ENCODE measurements at regions of chr1 and their contacts with region 1.

Region 1: GRCh38 chr1:15430787-15431570 is 7.3 kb upstream of the CTRC start:
- DNase-seq: peak; percentile 82
- ATAC-seq: peak; percentile 93
- H3K4me3 Mint-ChIP-seq: no peak overlapping the region
- H3K27ac Mint-ChIP-seq: no peak overlapping the region
- H3K4me1 Mint-ChIP-seq: peaks cover 7% of the 10 kb centered on the region
- H3K27me3 Mint-ChIP-seq: no peaks in the 10 kb centered on the region
- CTCF ChIP-seq: peak; percentile 99

Region 2: GRCh38 chr1:15417365-15417934 is 13.5 kb before region 1 on chr1:
- CTCF ChIA-PET with region 1: interaction called, 3 read pairs
- POLR2A ChIA-PET with region 1: interaction called, 11 read pairs
- intact Hi-C with region 1: no loop called
- DNase-seq: peak; percentile 63
- ATAC-seq: peak; percentile 60
- H3K4me3 Mint-ChIP-seq: peak overlapping the region; percentile 44
- H3K27ac Mint-ChIP-seq: peak overlapping the region; percentile 21
- H3K4me1 Mint-ChIP-seq: peaks cover 52% of the 10 kb centered on the region
- H3K27me3 Mint-ChIP-seq: no peaks in the 10 kb centered on the region
- CTCF ChIP-seq: no peak

Region 3: DNA sequence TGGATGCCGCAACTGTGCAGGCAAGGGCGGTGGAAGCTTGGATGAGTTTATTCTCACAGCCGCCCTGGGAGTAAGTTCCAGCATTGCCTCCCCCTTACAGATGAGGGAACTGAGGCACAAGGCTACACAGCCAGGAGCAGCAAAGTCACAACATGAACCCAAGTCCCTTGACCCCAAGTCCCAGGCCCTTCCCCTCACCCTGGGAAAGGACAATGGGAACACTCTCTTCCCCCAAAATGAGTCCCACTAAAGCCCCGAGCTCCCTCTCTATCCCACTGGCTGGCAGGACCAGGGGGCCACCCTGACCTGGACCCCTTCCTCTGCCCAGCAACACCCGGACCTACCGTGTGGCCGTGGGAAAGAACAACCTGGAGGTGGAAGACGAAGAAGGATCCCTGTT is 11.1 kb after region 1 on chr1:
- CTCF ChIA-PET with region 1: no interaction called
- POLR2A ChIA-PET with region 1: no interaction called
- intact Hi-C with region 1: no loop called
- DNase-seq: no peak
- ATAC-seq: no peak
- H3K4me3 Mint-ChIP-seq: no peak overlapping the region
- H3K27ac Mint-ChIP-seq: no peak overlapping the region
- H3K4me1 Mint-ChIP-seq: peaks cover 5% of the 10 kb centered on the region
- H3K27me3 Mint-ChIP-seq: peaks cover 2% of the 10 kb centered on the region
- CTCF ChIP-seq: no peak